PC-9 (cell line): ENCODE measurements at regions of chr7 and their contacts with region 1.

Region 1: DNA sequence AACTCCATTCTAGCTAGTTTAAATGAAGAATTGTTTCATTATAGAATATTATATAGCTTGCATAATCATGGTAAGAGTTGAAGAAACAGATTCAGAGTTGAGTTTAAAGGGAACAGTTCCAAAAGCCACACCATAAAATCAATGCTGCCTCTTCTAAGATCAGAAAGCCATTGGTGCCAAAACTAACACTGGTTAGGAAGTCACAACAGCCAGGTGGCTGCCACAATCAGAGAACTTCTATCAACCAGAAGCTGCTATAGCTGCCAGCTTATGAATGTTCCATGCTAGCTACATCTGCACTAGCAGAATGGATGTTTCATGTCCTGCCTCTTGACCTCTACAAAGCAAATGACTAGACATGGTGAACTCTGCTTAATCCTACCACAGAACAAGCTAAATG is 583.1 kb upstream of the LRRN3 start:
- DNase-seq: no peak
- H3K4me3 ChIP-seq: no peak overlapping the region
- H3K27ac ChIP-seq: no peak overlapping the region
- H3K4me1 ChIP-seq: no peaks in the 10 kb centered on the region
- H3K27me3 ChIP-seq: no peaks in the 10 kb centered on the region
- CTCF ChIP-seq: no peak

Region 2: GRCh38 chr7:109522585-109522984 is 985.2 kb before region 1 on chr7:
- CTCF ChIA-PET with region 1: no interaction called
- POLR2A ChIA-PET with region 1: interaction called, 24 read pairs
- intact Hi-C with region 1: no loop called
- DNase-seq: no peak
- H3K4me3 ChIP-seq: no peak overlapping the region
- H3K27ac ChIP-seq: no peak overlapping the region
- H3K4me1 ChIP-seq: no peaks in the 10 kb centered on the region
- H3K27me3 ChIP-seq: no peaks in the 10 kb centered on the region
- CTCF ChIP-seq: no peak

Region 3: DNA sequence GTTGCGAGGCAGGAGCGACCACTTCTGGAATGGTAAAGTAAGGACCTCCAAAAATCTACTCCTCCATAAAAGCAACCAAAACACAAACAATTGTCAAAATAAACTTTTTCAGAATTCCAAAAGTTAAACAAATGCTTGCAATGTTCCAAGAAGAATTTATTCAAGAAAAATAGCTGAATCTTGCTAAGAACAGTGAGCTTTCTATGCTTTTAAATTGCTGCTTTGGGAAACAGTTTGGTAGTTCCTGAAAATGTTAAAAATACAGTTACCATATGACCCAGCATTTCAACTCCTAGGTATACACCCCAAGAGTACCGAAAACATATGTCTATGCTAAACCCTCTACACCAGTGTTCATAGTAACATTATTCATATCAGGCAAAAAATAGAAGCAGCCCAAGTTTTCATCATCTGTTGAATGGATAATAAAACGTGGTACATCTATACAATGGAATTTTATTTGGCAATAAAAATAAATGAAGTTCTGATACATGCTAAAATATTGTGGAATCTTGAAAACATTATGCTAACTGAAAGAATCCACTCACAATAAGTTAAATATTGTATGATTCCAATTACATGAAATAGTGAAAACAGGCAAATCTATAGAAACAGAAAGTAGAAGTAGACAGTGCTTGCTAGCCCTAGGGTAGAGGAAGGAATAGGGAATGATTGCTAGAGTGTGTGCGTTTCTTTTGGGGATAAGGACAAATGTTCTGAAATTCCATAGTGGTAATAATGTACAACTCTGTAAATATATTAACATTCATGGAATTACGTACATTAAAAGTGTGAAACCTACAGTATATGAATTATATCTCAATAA is 640.1 kb after region 1 on chr7:
- CTCF ChIA-PET with region 1: no interaction called
- POLR2A ChIA-PET with region 1: no interaction called
- intact Hi-C with region 1: no loop called
- DNase-seq: no peak
- H3K4me3 ChIP-seq: no peak overlapping the region
- H3K27ac ChIP-seq: no peak overlapping the region
- H3K4me1 ChIP-seq: no peaks in the 10 kb centered on the region
- H3K27me3 ChIP-seq: no peaks in the 10 kb centered on the region
- CTCF ChIP-seq: no peak